ENCODE measurements at regions of chr5 and their contacts with region 1.

Region 1: GRCh38 chr5:151719228-151720000 is 32.7 kb upstream of the SPARC start:
- DNase-seq: peak; percentile 82
- H3K4me3 Mint-ChIP-seq: no peak overlapping the region
- H3K27ac Mint-ChIP-seq: no peak overlapping the region
- H3K4me1 Mint-ChIP-seq: no peaks in the 10 kb centered on the region
- H3K27me3 Mint-ChIP-seq: no peaks in the 10 kb centered on the region
- CTCF ChIP-seq: peak; percentile 72

Region 2: GRCh38 chr5:151708126-151708525 is 11.3 kb before region 1 on chr5:
- CTCF ChIA-PET with region 1: interaction called, 27 read pairs
- POLR2A ChIA-PET with region 1: interaction called, 5 read pairs
- intact Hi-C with region 1: no loop called
- DNase-seq: peak; percentile 47
- H3K4me3 Mint-ChIP-seq: no peak overlapping the region
- H3K27ac Mint-ChIP-seq: no peak overlapping the region
- H3K4me1 Mint-ChIP-seq: no peaks in the 10 kb centered on the region
- H3K27me3 Mint-ChIP-seq: no peaks in the 10 kb centered on the region
- CTCF ChIP-seq: no peak

Region 3: GRCh38 chr5:151786468-151786867 is 67.1 kb after region 1 on chr5:
- CTCF ChIA-PET with region 1: no interaction called
- POLR2A ChIA-PET with region 1: no interaction called
- intact Hi-C with region 1: no loop called
- DNase-seq: no peak
- H3K4me3 Mint-ChIP-seq: no peak overlapping the region
- H3K27ac Mint-ChIP-seq: no peak overlapping the region
- H3K4me1 Mint-ChIP-seq: peaks cover 26% of the 10 kb centered on the region
- H3K27me3 Mint-ChIP-seq: no peaks in the 10 kb centered on the region
- CTCF ChIP-seq: no peak

Region 4: GRCh38 chr5:151912360-151912759 is 192.9 kb after region 1 on chr5:
- CTCF ChIA-PET with region 1: no interaction called
- POLR2A ChIA-PET with region 1: no interaction called
- intact Hi-C with region 1: no loop called
- DNase-seq: no peak
- H3K4me3 Mint-ChIP-seq: no peak overlapping the region
- H3K27ac Mint-ChIP-seq: no peak overlapping the region
- H3K4me1 Mint-ChIP-seq: no peaks in the 10 kb centered on the region
- H3K27me3 Mint-ChIP-seq: peaks cover 14% of the 10 kb centered on the region
- CTCF ChIP-seq: no peak

Measured in MCF 10A (cell line).